H1 (cell line): ENCODE measurements at regions of chr17 and their contacts with region 1.

Region 1: GRCh38 chr17:36601303-36602029 is at the start of gene MRM1:
- DNase-seq: peak; percentile 90 to 93
- H3K4me3 ChIP-seq: peak within 1 kb of the TSS; percentile 75 to 94 (median 86)
- H3K27ac ChIP-seq: peak within 1 kb of the TSS; percentile 57; the same call in 1 of the 2 replicates
- H3K4me1 ChIP-seq: peaks cover 3 to 15% (median 9%) of the 10 kb centered on the region in 4 experiments
- H3K27me3 ChIP-seq: no peaks in the 10 kb centered on the region
- CTCF ChIP-seq: no peak; a peak in 1 of 4 replicates
- EP300 ChIP-seq: no peak
- POLR2A ChIP-seq: peak; percentile 34 to 84
- RAD21 ChIP-seq: no peak
- total RNA-seq, gene MRM1: 11.2 and 11.7 TPM in 2 replicates

Region 2: DNA sequence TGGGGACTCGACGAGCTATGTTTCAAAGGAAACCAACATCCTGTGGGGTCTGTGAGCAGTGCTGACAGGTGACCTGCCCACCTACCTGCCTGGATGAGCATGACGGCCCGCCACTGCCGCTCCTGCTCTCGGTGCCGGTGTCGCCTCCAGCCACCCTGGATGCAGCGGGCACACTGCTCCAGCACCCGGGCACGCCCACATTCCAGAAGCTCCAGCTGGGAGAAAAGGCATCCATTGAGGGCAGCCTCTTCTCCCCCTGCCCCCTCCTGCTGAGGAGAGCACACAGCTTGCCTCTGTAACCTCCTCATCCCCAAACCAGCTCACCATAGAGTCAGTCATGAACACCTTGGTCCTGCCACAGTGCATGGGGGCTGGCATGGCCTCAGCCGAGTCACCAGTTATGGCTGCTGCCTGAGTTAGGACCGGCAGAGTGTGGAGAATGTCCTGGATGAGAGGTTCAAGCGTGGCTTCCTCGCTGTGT is 100.7 kb before region 1 on chr17:
- CTCF ChIA-PET with region 1: no interaction called
- POLR2A ChIA-PET with region 1: no interaction called
- DNase-seq: no peak
- H3K4me3 ChIP-seq: no peak overlapping the region
- H3K27ac ChIP-seq: no peak overlapping the region
- H3K4me1 ChIP-seq: no peaks in the 10 kb centered on the region
- H3K27me3 ChIP-seq: no peaks in the 10 kb centered on the region
- CTCF ChIP-seq: no peak
- EP300 ChIP-seq: no peak
- POLR2A ChIP-seq: no peak
- RAD21 ChIP-seq: no peak

Region 3: DNA sequence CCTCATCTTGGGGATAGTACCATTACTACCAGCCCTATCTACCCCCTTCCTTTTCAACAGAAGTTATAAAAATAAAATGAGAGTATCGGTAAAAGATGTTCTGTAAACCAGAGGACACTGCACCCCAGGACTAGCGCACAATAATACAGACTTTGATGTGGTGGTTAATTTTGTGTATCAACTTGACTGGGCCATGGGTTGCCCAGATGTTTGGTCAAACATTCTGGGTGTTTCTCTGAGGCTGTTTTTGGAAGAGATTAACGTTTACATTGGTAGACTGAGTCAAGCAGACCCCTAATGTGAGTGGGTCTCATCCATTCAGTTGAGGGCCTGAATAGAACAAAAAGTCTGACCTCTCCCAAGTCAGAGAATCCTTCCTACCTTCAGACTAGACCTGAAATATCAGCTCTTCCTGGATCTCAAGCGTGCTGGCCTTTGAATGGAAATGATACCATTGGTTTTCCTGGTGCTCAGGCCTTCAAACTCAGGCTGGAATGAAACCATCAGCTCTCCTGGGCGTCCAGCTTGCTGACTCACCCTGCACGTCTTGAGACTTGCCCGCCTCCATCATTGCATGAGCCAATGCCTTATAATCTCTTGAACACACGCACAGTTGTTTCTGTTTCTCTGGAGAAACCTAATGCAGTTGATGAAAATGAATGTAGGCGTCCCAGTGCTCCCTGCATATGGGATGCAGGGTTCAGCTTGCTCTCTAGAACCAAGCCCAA is 10.0 kb after region 1 on chr17:
- CTCF ChIA-PET with region 1: interaction called, 84 read pairs
- POLR2A ChIA-PET with region 1: interaction called, 50 read pairs
- DNase-seq: no peak
- H3K4me3 ChIP-seq: no peak overlapping the region
- H3K27ac ChIP-seq: no peak overlapping the region
- H3K4me1 ChIP-seq: peaks cover 9 to 20% (median 16%) of the 10 kb centered on the region in 4 experiments
- H3K27me3 ChIP-seq: no peaks in the 10 kb centered on the region
- CTCF ChIP-seq: no peak
- EP300 ChIP-seq: no peak
- POLR2A ChIP-seq: no peak
- RAD21 ChIP-seq: no peak

Region 4: GRCh38 chr17:36641877-36642845 is 40.7 kb after region 1 on chr17:
- CTCF ChIA-PET with region 1: interaction called, 16 read pairs
- POLR2A ChIA-PET with region 1: interaction called, 3 read pairs
- DNase-seq: no peak
- H3K4me3 ChIP-seq: peak overlapping the region; percentile 37 to 70 (median 65)
- H3K27ac ChIP-seq: no peak overlapping the region
- H3K4me1 ChIP-seq: peaks cover 0 to 6% (median 2%) of the 10 kb centered on the region in 4 experiments; a peak in 6 of 7 replicates
- H3K27me3 ChIP-seq: peaks cover 19 to 47% (median 45%) of the 10 kb centered on the region in 4 experiments
- CTCF ChIP-seq: no peak
- EP300 ChIP-seq: no peak
- POLR2A ChIP-seq: no peak
- RAD21 ChIP-seq: no peak